Heart left ventricle (tissue), 16 donors: ENCODE measurements at regions of chr1 and their contacts with region 1.

Region 1: DNA sequence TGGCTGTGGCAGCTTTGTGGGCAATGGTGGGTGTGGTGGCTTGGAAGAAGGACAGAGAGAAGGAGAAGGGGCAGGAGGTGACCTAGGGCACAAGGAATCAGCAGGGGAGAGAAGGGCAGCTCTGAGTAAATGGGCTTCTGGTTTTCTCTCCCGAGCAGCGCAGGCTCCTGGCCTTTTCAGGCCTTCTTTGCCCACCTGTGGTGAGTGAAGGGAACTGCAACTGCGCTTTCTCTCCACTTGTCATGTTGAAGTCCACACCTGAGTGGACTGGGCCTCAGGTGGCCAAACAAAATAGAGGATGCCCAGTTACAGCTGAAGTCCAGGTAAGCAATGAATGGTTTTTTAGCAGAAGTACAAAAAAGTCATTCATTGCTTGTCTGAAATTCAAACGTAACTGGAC is 29.4 kb upstream of the KCNA10 start:
- DNase-seq: no peak
- ATAC-seq: no peak
- H3K4me3 ChIP-seq: no peak overlapping the region
- H3K27ac ChIP-seq: no peak overlapping the region
- H3K4me1 ChIP-seq: no peaks in the 10 kb centered on the region
- H3K27me3 ChIP-seq: peaks cover 0 to 34% (median 6%) of the 10 kb centered on the region in 9 donors
- CTCF ChIP-seq: peak in 9 of 12 donors; percentile 19 to 53 (median 32)
- POLR2A ChIP-seq: no peak

Region 2: GRCh38 chr1:110449661-110450651 is 98.4 kb before region 1 on chr1:
- intact Hi-C with region 1: no loop called
- DNase-seq: no peak
- ATAC-seq: no peak
- H3K4me3 ChIP-seq: no peak overlapping the region
- H3K27ac ChIP-seq: no peak overlapping the region
- H3K4me1 ChIP-seq: no peaks in the 10 kb centered on the region
- H3K27me3 ChIP-seq: peaks cover 0 to 20% (median 0%) of the 10 kb centered on the region in 9 donors
- CTCF ChIP-seq: no peak
- POLR2A ChIP-seq: no peak

Region 3: GRCh38 chr1:110766025-110766647 is 217.8 kb after region 1 on chr1:
- intact Hi-C with region 1: loop called in 1 of 10 experiments (anchors 10 kb)
- DNase-seq: peak in 3 of 5 donors; percentile 27 to 42 (median 32)
- ATAC-seq: peak in 2 of 4 donors; percentile 53 to 65
- H3K4me3 ChIP-seq: no peak overlapping the region
- H3K27ac ChIP-seq: no peak overlapping the region
- H3K4me1 ChIP-seq: peaks cover 0 to 4% (median 0%) of the 10 kb centered on the region in 12 donors
- H3K27me3 ChIP-seq: peaks cover 0 to 24% (median 2%) of the 10 kb centered on the region in 9 donors
- CTCF ChIP-seq: peak; percentile 68 to 91 (median 84)
- POLR2A ChIP-seq: no peak